GM12878 (cell line): ENCODE measurements at regions of chr2 and their contacts with region 1.

Region 1: GRCh38 chr2:177263451-177264208 is 897 bp downstream of the NFE2L2 start:
- DNase-seq: peak; percentile 71
- ATAC-seq: peak; percentile 74
- H3K4me3 ChIP-seq: peak overlapping the region; percentile 72
- H3K27ac ChIP-seq: peak overlapping the region; percentile 99
- H3K4me1 ChIP-seq: peaks cover 12% of the 10 kb centered on the region
- H3K27me3 ChIP-seq: no peaks in the 10 kb centered on the region
- CTCF ChIP-seq: peak; percentile 85 to 96 (median 86); a peak in 5 of 6 replicates
- EP300 ChIP-seq: peak; percentile 90 to 93
- POLR2A ChIP-seq: peak; percentile 81
- RAD21 ChIP-seq: peak; percentile 62

Region 2: GRCh38 chr2:177044671-177045070 is 219.0 kb before region 1 on chr2:
- CTCF ChIA-PET with region 1: no interaction called
- POLR2A ChIA-PET with region 1: no interaction called
- RAD21 ChIA-PET with region 1: no interaction called
- SMC1A ChIA-PET with region 1: no interaction called
- in situ Hi-C with region 1: no loop called
- intact Hi-C with region 1: no loop called
- DNase-seq: no peak
- ATAC-seq: no peak
- H3K4me3 ChIP-seq: no peak overlapping the region
- H3K27ac ChIP-seq: no peak overlapping the region
- H3K4me1 ChIP-seq: no peaks in the 10 kb centered on the region
- H3K27me3 ChIP-seq: no peaks in the 10 kb centered on the region
- CTCF ChIP-seq: no peak
- EP300 ChIP-seq: no peak
- POLR2A ChIP-seq: no peak
- RAD21 ChIP-seq: no peak

Region 3: GRCh38 chr2:177072090-177072489 is 191.5 kb before region 1 on chr2:
- CTCF ChIA-PET with region 1: no interaction called
- POLR2A ChIA-PET with region 1: no interaction called
- RAD21 ChIA-PET with region 1: no interaction called
- SMC1A ChIA-PET with region 1: no interaction called
- in situ Hi-C with region 1: no loop called
- intact Hi-C with region 1: no loop called
- DNase-seq: no peak
- ATAC-seq: no peak
- H3K4me3 ChIP-seq: no peak overlapping the region
- H3K27ac ChIP-seq: no peak overlapping the region
- H3K4me1 ChIP-seq: no peaks in the 10 kb centered on the region
- H3K27me3 ChIP-seq: no peaks in the 10 kb centered on the region
- CTCF ChIP-seq: no peak
- EP300 ChIP-seq: no peak
- POLR2A ChIP-seq: no peak
- RAD21 ChIP-seq: no peak

Region 4: DNA sequence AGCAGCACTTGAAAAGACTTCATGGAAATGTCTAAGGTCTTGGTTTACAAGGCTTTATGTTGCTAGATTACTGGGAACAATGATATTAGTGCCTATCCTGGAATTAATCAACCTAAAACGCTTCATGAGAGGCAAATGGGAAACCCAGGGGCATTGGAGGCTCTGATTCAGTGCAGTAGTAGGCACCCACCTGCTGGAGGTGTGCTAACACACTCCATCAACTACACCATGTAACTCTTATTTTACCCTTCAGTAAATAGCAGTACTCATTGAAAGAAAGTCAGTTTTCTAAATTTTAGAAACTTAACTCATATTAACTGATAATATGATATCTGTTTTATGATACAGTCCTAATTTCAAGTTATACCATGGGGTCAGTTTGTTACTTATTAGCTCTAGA is 68.4 kb before region 1 on chr2:
- CTCF ChIA-PET with region 1: interaction called, 40 read pairs
- POLR2A ChIA-PET with region 1: interaction called, 22 read pairs
- RAD21 ChIA-PET with region 1: interaction called, 7 read pairs
- SMC1A ChIA-PET with region 1: interaction called, 11 read pairs
- in situ Hi-C with region 1: no loop called
- intact Hi-C with region 1: no loop called
- DNase-seq: no peak
- ATAC-seq: peak; percentile 86
- H3K4me3 ChIP-seq: no peak overlapping the region
- H3K27ac ChIP-seq: no peak overlapping the region
- H3K4me1 ChIP-seq: peaks cover 7% of the 10 kb centered on the region; the same call in 1 of the 2 replicates
- H3K27me3 ChIP-seq: no peaks in the 10 kb centered on the region
- CTCF ChIP-seq: peak; percentile 11 to 40 (median 23); a peak in 3 of 6 replicates
- EP300 ChIP-seq: no peak
- POLR2A ChIP-seq: no peak
- RAD21 ChIP-seq: peak; percentile 29; the same call in 1 of the 2 replicates

Region 5: GRCh38 chr2:177239932-177240630 is 23.5 kb before region 1 on chr2:
- CTCF ChIA-PET with region 1: interaction called, 8 read pairs
- POLR2A ChIA-PET with region 1: interaction called, 29 read pairs
- RAD21 ChIA-PET with region 1: interaction called, 32 read pairs
- SMC1A ChIA-PET with region 1: interaction called, 23 read pairs
- in situ Hi-C with region 1: no loop called
- intact Hi-C with region 1: loop called (anchors 2 kb)
- DNase-seq: peak; percentile 47
- ATAC-seq: peak; percentile 86
- H3K4me3 ChIP-seq: no peak overlapping the region
- H3K27ac ChIP-seq: peak overlapping the region; percentile 0; the same call in 1 of the 2 replicates
- H3K4me1 ChIP-seq: peaks cover 22% of the 10 kb centered on the region
- H3K27me3 ChIP-seq: no peaks in the 10 kb centered on the region
- CTCF ChIP-seq: no peak
- EP300 ChIP-seq: no peak
- POLR2A ChIP-seq: no peak
- RAD21 ChIP-seq: no peak

Region 6: DNA sequence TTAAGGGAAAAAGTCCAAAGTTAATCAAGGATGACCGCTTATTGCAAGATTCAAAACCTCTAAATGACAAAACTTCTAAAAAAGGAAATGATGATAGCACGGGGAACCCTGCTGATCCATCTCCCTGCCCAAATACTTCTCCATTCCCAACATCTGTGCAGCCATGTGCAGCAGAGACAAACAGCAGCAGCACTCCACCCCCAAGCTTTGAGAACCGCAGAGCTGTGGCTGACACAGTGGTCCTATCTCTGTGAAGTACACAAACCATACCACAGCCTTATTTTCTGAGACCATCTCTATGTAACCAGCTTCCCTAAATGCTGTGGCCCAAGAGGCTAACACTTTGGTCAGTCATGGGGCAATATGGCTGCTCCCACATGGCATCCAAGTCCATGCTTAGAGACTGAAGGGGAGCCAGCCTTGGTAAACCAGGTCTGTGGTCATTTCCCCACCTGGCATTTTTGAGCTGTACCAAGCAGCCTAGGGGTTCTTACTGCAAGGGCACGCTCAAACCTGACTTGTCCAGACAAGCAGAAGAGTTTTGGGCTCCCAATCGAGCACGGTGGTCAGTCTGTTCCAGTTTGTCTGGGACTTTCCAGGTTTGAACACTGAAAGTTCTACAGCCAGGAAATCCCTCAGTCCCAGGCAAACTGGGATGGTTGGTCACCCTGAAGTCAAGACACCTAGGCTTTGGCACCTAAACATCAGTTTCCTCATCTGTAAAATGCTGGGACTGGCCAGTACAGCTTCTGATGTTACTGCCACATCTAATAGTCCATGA is 18.0 kb after region 1 on chr2:
- CTCF ChIA-PET with region 1: interaction called, 95 read pairs
- POLR2A ChIA-PET with region 1: interaction called, 76 read pairs
- RAD21 ChIA-PET with region 1: interaction called, 52 read pairs
- SMC1A ChIA-PET with region 1: interaction called, 94 read pairs
- in situ Hi-C with region 1: no loop called
- intact Hi-C with region 1: loop called (anchors 2 kb)
- DNase-seq: peak; percentile 64
- ATAC-seq: peak; percentile 76
- H3K4me3 ChIP-seq: no peak overlapping the region
- H3K27ac ChIP-seq: peak overlapping the region; percentile 78
- H3K4me1 ChIP-seq: peaks cover 20% of the 10 kb centered on the region
- H3K27me3 ChIP-seq: no peaks in the 10 kb centered on the region
- CTCF ChIP-seq: no peak
- EP300 ChIP-seq: no peak
- POLR2A ChIP-seq: no peak
- RAD21 ChIP-seq: no peak

Region 7: GRCh38 chr2:177296040-177296439 is 32.4 kb after region 1 on chr2:
- CTCF ChIA-PET with region 1: interaction called, 129 read pairs
- POLR2A ChIA-PET with region 1: interaction called, 20 read pairs
- RAD21 ChIA-PET with region 1: interaction called, 38 read pairs
- SMC1A ChIA-PET with region 1: interaction called, 45 read pairs
- in situ Hi-C with region 1: no loop called
- intact Hi-C with region 1: loop called (anchors 1 kb)
- DNase-seq: no peak
- ATAC-seq: peak; percentile 86
- H3K4me3 ChIP-seq: no peak overlapping the region
- H3K27ac ChIP-seq: no peak overlapping the region
- H3K4me1 ChIP-seq: peaks cover 5% of the 10 kb centered on the region; the same call in 1 of the 2 replicates
- H3K27me3 ChIP-seq: no peaks in the 10 kb centered on the region
- CTCF ChIP-seq: peak in 2 of 3 experiments; percentile 36 to 48; a peak in 2 of 6 replicates
- EP300 ChIP-seq: no peak
- POLR2A ChIP-seq: no peak
- RAD21 ChIP-seq: peak; percentile 45

Region 8: DNA sequence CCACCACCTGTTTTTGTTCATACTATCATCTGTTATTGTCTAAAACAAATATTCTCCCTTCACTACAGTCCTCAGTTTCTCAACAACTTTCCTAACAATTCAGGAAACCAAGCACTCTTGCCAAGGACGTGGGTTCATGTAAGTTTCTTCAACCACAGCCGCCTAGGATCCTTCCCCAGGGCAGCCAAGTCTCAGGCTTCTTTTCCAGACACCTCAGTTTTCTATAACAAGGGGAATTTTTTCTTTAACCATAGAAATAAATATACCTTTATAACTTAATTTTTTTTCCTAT is 89.5 kb after region 1 on chr2:
- CTCF ChIA-PET with region 1: no interaction called
- POLR2A ChIA-PET with region 1: no interaction called
- RAD21 ChIA-PET with region 1: no interaction called
- SMC1A ChIA-PET with region 1: no interaction called
- in situ Hi-C with region 1: no loop called
- intact Hi-C with region 1: no loop called
- DNase-seq: no peak
- ATAC-seq: no peak
- H3K4me3 ChIP-seq: no peak overlapping the region
- H3K27ac ChIP-seq: no peak overlapping the region
- H3K4me1 ChIP-seq: peaks cover 9% of the 10 kb centered on the region
- H3K27me3 ChIP-seq: no peaks in the 10 kb centered on the region
- CTCF ChIP-seq: no peak
- EP300 ChIP-seq: no peak
- POLR2A ChIP-seq: no peak
- RAD21 ChIP-seq: no peak